ENCODE measurements at regions of chr11 and their contacts with region 1.

Region 1: DNA sequence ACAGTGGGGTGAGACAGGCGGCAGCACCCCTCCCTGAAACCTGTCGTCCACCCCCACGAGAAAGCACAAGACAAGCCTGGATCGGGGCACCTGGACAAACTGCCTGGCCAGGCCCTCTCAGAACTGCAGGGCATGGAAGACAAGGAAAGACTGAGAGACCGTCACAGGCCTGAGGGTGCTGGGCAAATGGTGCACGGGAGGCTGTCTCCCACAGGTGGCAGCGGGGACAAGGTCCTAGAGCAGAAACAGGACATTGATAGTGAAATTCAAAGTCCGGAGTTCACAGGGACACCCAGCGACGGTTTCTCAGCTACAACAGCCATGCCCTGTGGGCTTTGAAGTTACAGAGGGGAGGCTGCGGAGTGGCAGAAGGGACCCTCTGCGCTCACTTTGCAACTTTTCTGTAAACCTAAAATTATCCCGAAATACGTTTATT is 20.6 kb downstream of the DRD4 start:
- DNase-seq: no peak
- H3K4me3 ChIP-seq: peak overlapping the region in 1 of 3 donors; percentile 13
- H3K27ac ChIP-seq: peak overlapping the region; percentile 57 to 60
- H3K4me1 ChIP-seq: no peaks in the 10 kb centered on the region
- H3K27me3 ChIP-seq: no peaks in the 10 kb centered on the region
- CTCF ChIP-seq: no peak
- POLR2A ChIP-seq: no peak

Region 2: GRCh38 chr11:737371-737770 is 79.7 kb after region 1 on chr11:
- intact Hi-C with region 1: loop called (anchors 2 kb)
- DNase-seq: no peak
- H3K4me3 ChIP-seq: no peak overlapping the region
- H3K27ac ChIP-seq: no peak overlapping the region
- H3K4me1 ChIP-seq: no peaks in the 10 kb centered on the region
- H3K27me3 ChIP-seq: no peaks in the 10 kb centered on the region
- CTCF ChIP-seq: no peak
- POLR2A ChIP-seq: no peak

Region 3: GRCh38 chr11:2474061-2474901 is 1816.6 kb after region 1 on chr11:
- intact Hi-C with region 1: no loop called
- DNase-seq: no peak
- H3K4me3 ChIP-seq: no peak overlapping the region
- H3K27ac ChIP-seq: no peak overlapping the region
- H3K4me1 ChIP-seq: no peaks in the 10 kb centered on the region
- H3K27me3 ChIP-seq: no peaks in the 10 kb centered on the region
- CTCF ChIP-seq: no peak
- POLR2A ChIP-seq: no peak